ENCODE measurements at regions of chr10 and their contacts with region 1.

Region 1: DNA sequence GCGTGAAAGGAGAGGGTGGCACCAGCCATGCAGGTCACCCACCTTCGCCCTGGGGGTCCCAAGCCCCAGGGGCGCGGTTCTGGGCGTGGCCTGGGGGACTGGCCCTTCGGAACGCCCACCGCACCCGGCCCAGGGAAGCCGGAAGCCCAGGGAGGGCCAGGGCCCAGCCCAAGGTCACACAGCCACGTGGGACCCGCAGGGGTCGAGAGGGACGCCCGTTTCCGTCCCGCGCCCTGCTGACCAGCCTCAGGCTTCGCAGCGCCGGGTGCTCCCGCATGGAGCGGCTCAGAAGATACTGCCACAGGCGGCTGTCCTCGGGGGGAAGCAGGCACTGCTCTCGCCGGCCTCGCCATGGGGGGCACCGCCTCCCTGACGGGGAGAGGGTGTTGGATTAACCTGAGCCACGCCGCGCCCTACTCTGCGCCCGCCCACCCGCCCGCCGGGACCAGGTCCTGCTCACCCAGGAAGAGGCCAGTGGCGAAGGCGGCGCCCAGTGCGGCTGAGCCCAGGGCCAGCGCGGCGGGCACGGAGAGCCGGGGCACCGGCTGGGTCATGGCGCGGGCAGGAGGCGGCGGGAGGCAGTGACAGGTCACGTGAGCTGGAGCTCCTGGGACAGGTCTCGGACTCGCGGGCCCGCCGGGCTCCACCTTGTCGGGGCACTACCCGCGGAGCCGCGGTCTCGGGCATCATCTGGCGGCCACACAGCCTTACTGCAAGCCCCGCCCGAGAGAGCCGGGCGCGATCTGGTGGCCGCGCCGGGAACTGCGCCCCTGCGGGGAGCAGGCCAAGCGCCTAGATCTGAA is at the start of gene COMTD1:
- DNase-seq: peak; percentile 96
- ATAC-seq: peak; percentile 70
- H3K4me3 Mint-ChIP-seq: peak within 1 kb of the TSS; percentile 85
- H3K27ac Mint-ChIP-seq: peak within 1 kb of the TSS; percentile 83
- H3K4me1 Mint-ChIP-seq: peaks cover 19% of the 10 kb centered on the region
- H3K27me3 Mint-ChIP-seq: no peaks in the 10 kb centered on the region
- CTCF ChIP-seq: peak; percentile 99
- total RNA-seq, gene COMTD1: 13.2 and 15.4 TPM in 2 replicates

Region 2: GRCh38 chr10:73848821-73849489 is 1386.6 kb before region 1 on chr10:
- CTCF ChIA-PET with region 1: no interaction called
- POLR2A ChIA-PET with region 1: no interaction called
- intact Hi-C with region 1: loop called (anchors 10 kb)
- DNase-seq: peak; percentile 93
- ATAC-seq: peak; percentile 100
- H3K4me3 Mint-ChIP-seq: peak overlapping the region; percentile 52
- H3K27ac Mint-ChIP-seq: peak overlapping the region; percentile 74
- H3K4me1 Mint-ChIP-seq: peaks cover 11% of the 10 kb centered on the region
- H3K27me3 Mint-ChIP-seq: no peaks in the 10 kb centered on the region
- CTCF ChIP-seq: peak; percentile 94

Region 3: DNA sequence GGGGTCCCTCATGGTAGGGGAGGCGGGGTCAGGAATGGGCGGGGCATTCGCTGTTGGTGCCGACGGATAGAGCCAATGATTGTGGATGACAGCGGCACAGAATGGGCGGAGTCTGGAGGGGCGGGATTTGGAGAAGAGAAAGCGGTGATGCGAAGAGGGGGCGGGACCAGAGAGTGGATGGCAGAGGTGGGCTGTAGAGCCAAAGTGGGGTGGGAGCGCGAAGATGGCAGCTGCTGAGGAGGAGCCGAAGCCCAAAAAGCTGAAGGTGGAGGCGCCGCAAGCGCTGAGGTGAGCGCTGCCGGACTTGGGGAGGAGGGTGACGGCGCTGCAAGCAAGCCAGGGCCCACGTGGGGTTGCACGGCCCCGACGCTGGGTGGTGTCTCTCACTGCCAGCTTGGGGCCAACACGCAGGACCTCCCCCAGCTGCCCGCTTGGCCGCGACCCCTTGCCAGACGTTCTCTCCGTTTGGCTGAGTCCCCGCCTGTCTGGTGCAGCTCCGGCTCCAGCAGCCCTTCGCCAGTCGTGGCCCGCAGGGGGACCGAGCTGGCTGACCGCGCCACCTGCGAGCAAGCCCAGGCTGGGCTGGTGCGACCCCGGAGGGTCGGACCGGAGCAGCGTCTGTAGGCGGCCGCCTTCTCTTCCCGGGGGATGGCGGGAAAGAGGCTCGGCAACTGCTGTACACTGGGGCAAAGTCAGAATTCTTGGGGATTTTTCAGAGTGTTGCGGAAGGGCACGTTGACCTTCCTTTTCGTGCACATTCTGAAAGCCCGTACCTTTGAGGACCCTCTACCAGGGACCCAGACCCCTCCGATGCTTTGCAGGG is 1084.3 kb before region 1 on chr10 and contains the start of gene ADK:
- CTCF ChIA-PET with region 1: no interaction called
- POLR2A ChIA-PET with region 1: interaction called, 3 read pairs
- intact Hi-C with region 1: loop called (anchors 1 kb)
- DNase-seq: peak; percentile 99
- ATAC-seq: peak; percentile 96
- H3K4me3 Mint-ChIP-seq: no peak within 1 kb of the TSS
- H3K27ac Mint-ChIP-seq: no peak within 1 kb of the TSS
- H3K4me1 Mint-ChIP-seq: peaks cover 61% of the 10 kb centered on the region
- H3K27me3 Mint-ChIP-seq: no peaks in the 10 kb centered on the region
- CTCF ChIP-seq: no peak
- total RNA-seq, gene ADK: 46.1 and 47.5 TPM in 2 replicates

Region 4: GRCh38 chr10:74419958-74420375 is 815.6 kb before region 1 on chr10:
- CTCF ChIA-PET with region 1: interaction called, 3 read pairs
- POLR2A ChIA-PET with region 1: no interaction called
- intact Hi-C with region 1: loop called (anchors 10 kb)
- DNase-seq: no peak
- ATAC-seq: peak; percentile 58
- H3K4me3 Mint-ChIP-seq: no peak overlapping the region
- H3K27ac Mint-ChIP-seq: peak overlapping the region; percentile 1
- H3K4me1 Mint-ChIP-seq: peaks cover 21% of the 10 kb centered on the region
- H3K27me3 Mint-ChIP-seq: no peaks in the 10 kb centered on the region
- CTCF ChIP-seq: no peak

Region 5: DNA sequence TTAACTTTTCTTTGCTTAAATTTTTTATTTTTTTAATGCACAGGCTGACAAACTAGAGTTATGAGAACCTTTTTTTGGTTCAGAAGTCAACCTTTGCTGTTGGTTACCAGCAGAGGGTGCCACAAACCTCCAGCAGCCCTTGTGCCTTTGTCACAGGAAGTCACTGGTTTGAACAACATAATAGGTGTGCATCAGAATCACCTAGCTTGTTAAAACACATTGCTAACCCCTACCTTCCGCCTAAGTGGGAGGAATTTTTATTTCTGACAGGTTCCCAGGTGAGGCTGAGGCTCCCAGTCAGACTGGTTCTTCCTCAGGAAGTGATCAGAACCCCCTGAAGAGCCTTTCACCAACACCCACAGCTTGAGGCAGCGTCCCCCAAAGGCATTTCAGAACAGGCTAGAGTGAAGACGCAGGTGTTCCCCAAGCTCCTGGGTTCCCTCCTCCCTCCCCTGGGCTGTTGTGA is 47.6 kb before region 1 on chr10:
- CTCF ChIA-PET with region 1: interaction called, 32 read pairs
- POLR2A ChIA-PET with region 1: no interaction called
- intact Hi-C with region 1: loop called (anchors 1 kb)
- DNase-seq: no peak
- ATAC-seq: peak; percentile 78
- H3K4me3 Mint-ChIP-seq: no peak overlapping the region
- H3K27ac Mint-ChIP-seq: peak overlapping the region; percentile 30
- H3K4me1 Mint-ChIP-seq: peaks cover 5% of the 10 kb centered on the region
- H3K27me3 Mint-ChIP-seq: no peaks in the 10 kb centered on the region
- CTCF ChIP-seq: no peak

Measured in activated B cell treated with CpG ODN at 0.5 μM for 24 hours (primary cell).